Activated CD8-positive, alpha-beta memory T cell treated with anti-CD3 and anti-CD28 coated beads, Interleukin-2, amount 10 ng/mL, durations not matched to agents 7 days and 5 days (primary cell): ENCODE measurements at regions of chr6 and their contacts with region 1.

Region 1: GRCh38 chr6:188821-189655 is 103.2 kb upstream of the DUSP22 start:
- DNase-seq: peak; percentile 95
- ATAC-seq: peak; percentile 86
- H3K4me3 Mint-ChIP-seq: peak overlapping the region; percentile 36
- H3K27ac Mint-ChIP-seq: peak overlapping the region; percentile 96
- H3K4me1 Mint-ChIP-seq: peaks cover 55% of the 10 kb centered on the region
- H3K27me3 Mint-ChIP-seq: no peaks in the 10 kb centered on the region

Region 2: GRCh38 chr6:217048-217659 is 28.1 kb after region 1 on chr6:
- CTCF ChIA-PET with region 1: interaction called, 42 read pairs
- DNase-seq: no peak
- ATAC-seq: no peak
- H3K4me3 Mint-ChIP-seq: no peak overlapping the region
- H3K27ac Mint-ChIP-seq: peak overlapping the region; percentile 37
- H3K4me1 Mint-ChIP-seq: peaks cover 60% of the 10 kb centered on the region
- H3K27me3 Mint-ChIP-seq: peaks cover 4% of the 10 kb centered on the region

Region 3: GRCh38 chr6:291697-292505 is 102.9 kb after region 1 on chr6 and contains the start of gene DUSP22:
- CTCF ChIA-PET with region 1: interaction called, 12 read pairs
- DNase-seq: peak; percentile 91
- ATAC-seq: peak; percentile 76
- H3K4me3 Mint-ChIP-seq: peak within 1 kb of the TSS; percentile 92
- H3K27ac Mint-ChIP-seq: peak within 1 kb of the TSS; percentile 92
- H3K4me1 Mint-ChIP-seq: peaks cover 63% of the 10 kb centered on the region
- H3K27me3 Mint-ChIP-seq: no peaks in the 10 kb centered on the region
- total RNA-seq, gene DUSP22: 38.1 to 47.8 TPM

Region 4: GRCh38 chr6:391559-392440 is 202.8 kb after region 1 on chr6 and contains the start of gene IRF4:
- CTCF ChIA-PET with region 1: interaction called, 50 read pairs
- DNase-seq: peak; percentile 81
- ATAC-seq: peak; percentile 56
- H3K4me3 Mint-ChIP-seq: peak within 1 kb of the TSS; percentile 94
- H3K27ac Mint-ChIP-seq: peak within 1 kb of the TSS; percentile 95
- H3K4me1 Mint-ChIP-seq: peaks cover 53% of the 10 kb centered on the region
- H3K27me3 Mint-ChIP-seq: no peaks in the 10 kb centered on the region
- total RNA-seq, gene IRF4: 184 to 254 TPM